HepG2 (cell line): ENCODE measurements at regions of chr4 and their contacts with region 1.

Region 1: DNA sequence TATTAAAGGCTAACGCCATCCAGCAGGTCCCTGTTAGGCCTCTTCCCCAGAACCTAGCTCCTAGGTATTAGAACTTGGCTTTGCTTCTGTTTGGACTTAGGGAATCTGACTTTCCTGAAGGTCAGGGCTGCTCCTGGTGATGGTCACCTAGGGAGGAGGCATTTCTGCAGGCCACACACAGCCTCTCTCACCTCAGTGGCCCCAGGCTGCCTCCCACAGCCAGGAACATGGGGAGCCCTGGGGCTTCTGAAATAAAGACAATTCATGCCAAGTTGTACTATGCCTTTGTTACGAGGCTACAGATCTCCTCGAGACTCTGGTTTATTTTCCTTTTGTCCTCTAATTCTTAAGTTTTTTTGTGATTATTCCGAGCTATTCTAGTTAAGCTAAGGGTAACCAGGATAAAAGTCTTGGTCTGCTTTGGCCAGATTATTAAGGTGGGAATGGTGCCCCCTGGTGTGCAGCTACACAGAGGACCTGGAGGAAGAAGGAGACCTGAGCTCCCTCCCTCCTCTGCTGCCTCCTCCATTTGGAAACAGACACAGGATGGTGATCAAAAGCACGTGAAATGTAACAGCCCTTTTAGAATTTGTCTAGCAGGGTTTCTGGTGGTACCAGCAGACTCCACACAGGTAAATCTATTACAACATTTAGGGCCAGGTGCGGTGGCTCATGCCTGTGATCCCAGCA is 131.0 kb downstream of the DCLK2 start:
- DNase-seq: peak; percentile 41
- ATAC-seq: peak; percentile 98
- H3K4me3 ChIP-seq: no peak overlapping the region
- H3K27ac ChIP-seq: no peak overlapping the region
- H3K4me1 ChIP-seq: no peaks in the 10 kb centered on the region
- H3K27me3 ChIP-seq: no peaks in the 10 kb centered on the region
- CTCF ChIP-seq: peak; percentile 65
- EP300 ChIP-seq: no peak
- POLR2A ChIP-seq: no peak
- RAD21 ChIP-seq: peak; percentile 39; the same call in 1 of the 2 replicates

Region 2: DNA sequence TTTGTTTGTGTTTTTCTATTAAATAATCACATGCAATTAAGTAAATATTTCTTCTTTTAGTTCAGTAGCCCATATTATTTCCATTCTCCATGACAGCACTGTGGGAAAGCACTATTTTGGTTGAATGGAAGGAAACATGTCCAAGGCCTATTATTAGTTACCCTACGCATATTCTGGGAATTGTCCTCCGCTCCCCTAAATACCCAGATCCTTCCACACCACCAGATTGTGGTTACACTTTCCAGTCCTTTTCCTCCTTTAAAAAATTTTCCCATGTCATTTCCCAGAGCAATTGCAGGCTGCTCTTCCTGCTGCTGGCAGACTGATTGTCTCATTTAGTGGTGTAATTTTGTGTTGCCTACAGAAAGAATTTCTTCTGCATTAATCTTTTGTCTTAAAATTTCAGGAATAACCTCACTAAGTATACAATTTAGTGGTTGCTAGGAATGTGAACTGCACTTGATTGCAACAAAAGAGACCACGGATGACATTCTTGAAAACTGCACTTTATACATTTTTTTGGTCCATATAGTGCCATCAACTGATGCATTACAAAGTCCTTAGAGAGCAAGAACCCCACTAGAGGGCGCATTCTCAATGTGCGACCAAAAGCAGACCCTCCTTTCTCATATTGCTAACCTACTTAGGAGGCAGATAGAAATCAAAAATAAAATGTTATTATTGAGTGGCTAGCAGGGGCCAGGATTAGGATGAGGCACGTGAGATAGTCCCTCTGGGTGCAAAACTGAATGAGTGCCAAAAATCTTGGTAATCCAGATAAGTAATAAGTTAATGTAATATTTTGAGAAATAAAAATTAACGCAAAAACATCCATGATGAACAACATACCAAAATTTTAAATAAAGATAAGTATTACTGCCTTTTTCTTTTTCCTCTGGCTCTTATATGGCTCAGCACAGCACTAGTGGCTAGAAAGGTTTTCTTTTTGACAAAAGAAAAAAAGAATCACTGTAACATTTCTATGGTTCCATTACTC is 294.9 kb before region 1 on chr4:
- CTCF ChIA-PET with region 1: no interaction called
- POLR2A ChIA-PET with region 1: no interaction called
- in situ Hi-C with region 1: no loop called
- intact Hi-C with region 1: loop called (anchors 2 kb)
- DNase-seq: peak; percentile 32
- ATAC-seq: peak; percentile 86
- H3K4me3 ChIP-seq: no peak overlapping the region
- H3K27ac ChIP-seq: no peak overlapping the region
- H3K4me1 ChIP-seq: no peaks in the 10 kb centered on the region
- H3K27me3 ChIP-seq: no peaks in the 10 kb centered on the region
- CTCF ChIP-seq: peak; percentile 55
- EP300 ChIP-seq: no peak
- POLR2A ChIP-seq: no peak
- RAD21 ChIP-seq: no peak

Region 3: DNA sequence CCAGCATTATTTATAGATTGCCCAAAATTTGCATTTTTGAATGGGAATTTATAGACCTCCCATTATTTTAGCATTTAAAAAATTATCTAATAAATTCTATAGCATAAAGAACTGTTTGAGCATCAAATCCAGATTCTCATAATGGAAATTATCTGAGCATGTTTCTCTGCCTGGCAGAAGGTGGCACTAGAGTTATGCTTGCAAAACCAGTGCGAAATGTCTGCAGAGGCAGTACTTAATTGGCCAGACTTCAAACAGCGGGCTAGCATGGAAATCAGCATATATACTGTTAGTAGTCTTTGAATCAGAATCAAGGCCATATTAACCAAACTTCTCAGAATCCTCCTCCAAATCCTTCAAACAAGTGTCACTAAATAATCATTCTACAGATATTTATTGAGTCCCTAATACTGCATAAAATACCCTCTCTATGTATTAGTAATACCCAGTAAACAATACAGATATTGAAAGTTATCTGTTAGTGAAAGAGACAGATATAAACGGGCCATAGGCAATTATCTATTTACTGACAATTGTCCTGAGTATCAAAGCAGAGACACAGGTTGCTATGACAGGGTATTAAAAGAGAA is 209.7 kb before region 1 on chr4:
- CTCF ChIA-PET with region 1: interaction called, 3 read pairs
- POLR2A ChIA-PET with region 1: no interaction called
- in situ Hi-C with region 1: no loop called
- intact Hi-C with region 1: loop called (anchors 1 kb)
- DNase-seq: peak; percentile 32
- ATAC-seq: peak; percentile 73
- H3K4me3 ChIP-seq: no peak overlapping the region
- H3K27ac ChIP-seq: no peak overlapping the region
- H3K4me1 ChIP-seq: peaks cover 12% of the 10 kb centered on the region
- H3K27me3 ChIP-seq: no peaks in the 10 kb centered on the region; a peak in 1 of 5 replicates
- CTCF ChIP-seq: peak; percentile 67
- EP300 ChIP-seq: no peak
- POLR2A ChIP-seq: no peak
- RAD21 ChIP-seq: peak; percentile 51; the same call in 1 of the 2 replicates

Region 4: GRCh38 chr4:150010525-150011126 is 198.7 kb before region 1 on chr4:
- CTCF ChIA-PET with region 1: interaction called, 19 read pairs
- POLR2A ChIA-PET with region 1: no interaction called
- in situ Hi-C with region 1: no loop called
- intact Hi-C with region 1: loop called (anchors 1 kb)
- DNase-seq: peak; percentile 41
- ATAC-seq: peak; percentile 90
- H3K4me3 ChIP-seq: no peak overlapping the region
- H3K27ac ChIP-seq: no peak overlapping the region
- H3K4me1 ChIP-seq: no peaks in the 10 kb centered on the region
- H3K27me3 ChIP-seq: no peaks in the 10 kb centered on the region; a peak in 1 of 5 replicates
- CTCF ChIP-seq: peak; percentile 62
- EP300 ChIP-seq: no peak
- POLR2A ChIP-seq: no peak
- RAD21 ChIP-seq: peak; percentile 42; the same call in 1 of the 2 replicates